CD4-positive, alpha-beta memory T cell (primary cell): ENCODE measurements at regions of chr22 and their contacts with region 1.

Region 1: GRCh38 chr22:41091132-41092022 is 1.0 kb upstream of the EP300 start:
- DNase-seq: peak; percentile 98 to 99 (median 99)
- H3K4me3 ChIP-seq: peak overlapping the region; percentile 79 to 93
- H3K4me3 Mint-ChIP-seq: peak overlapping the region; percentile 93 to 100 (median 98)
- H3K27ac ChIP-seq: peak overlapping the region; percentile 99
- H3K27ac Mint-ChIP-seq: peak overlapping the region; percentile 97 to 100 (median 99)
- H3K4me1 ChIP-seq: peaks cover 27% of the 10 kb centered on the region
- H3K4me1 Mint-ChIP-seq: peaks cover 20 to 44% (median 27%) of the 10 kb centered on the region in 4 donors
- H3K27me3 ChIP-seq: no peaks in the 10 kb centered on the region
- H3K27me3 Mint-ChIP-seq: no peaks in the 10 kb centered on the region

Region 2: GRCh38 chr22:40791241-40791640 is 300.1 kb before region 1 on chr22:
- CTCF ChIA-PET with region 1: no interaction called
- POLR2A ChIA-PET with region 1: no interaction called
- intact Hi-C with region 1: no loop called
- DNase-seq: no peak
- H3K4me3 ChIP-seq: no peak overlapping the region
- H3K4me3 Mint-ChIP-seq: no peak overlapping the region
- H3K27ac ChIP-seq: no peak overlapping the region
- H3K27ac Mint-ChIP-seq: peak overlapping the region in 2 of 7 donors; percentile 22 to 36
- H3K4me1 ChIP-seq: no peaks in the 10 kb centered on the region
- H3K4me1 Mint-ChIP-seq: peaks cover 0 to 5% (median under 1%) of the 10 kb centered on the region in 4 donors
- H3K27me3 ChIP-seq: no peaks in the 10 kb centered on the region
- H3K27me3 Mint-ChIP-seq: no peaks in the 10 kb centered on the region

Region 3: GRCh38 chr22:40818747-40819598 is 272.4 kb before region 1 on chr22 and contains the start of gene SLC25A17:
- CTCF ChIA-PET with region 1: no interaction called
- POLR2A ChIA-PET with region 1: no interaction called
- intact Hi-C with region 1: loop called (anchors 1 kb)
- DNase-seq: peak; percentile 81 to 84 (median 82)
- H3K4me3 ChIP-seq: peak within 1 kb of the TSS; percentile 92 to 95
- H3K4me3 Mint-ChIP-seq: peak within 1 kb of the TSS; percentile 92 to 99 (median 97)
- H3K27ac ChIP-seq: peak within 1 kb of the TSS; percentile 81
- H3K27ac Mint-ChIP-seq: peak within 1 kb of the TSS; percentile 82 to 98 (median 95)
- H3K4me1 ChIP-seq: peaks cover 27% of the 10 kb centered on the region
- H3K4me1 Mint-ChIP-seq: peaks cover 29 to 46% (median 36%) of the 10 kb centered on the region in 4 donors
- H3K27me3 ChIP-seq: no peaks in the 10 kb centered on the region
- H3K27me3 Mint-ChIP-seq: no peaks in the 10 kb centered on the region
- total RNA-seq, gene SLC25A17: 15.4 to 15.6 TPM

Region 4: GRCh38 chr22:41022470-41023298 is 68.7 kb before region 1 on chr22:
- CTCF ChIA-PET with region 1: no interaction called
- POLR2A ChIA-PET with region 1: interaction called, 73 read pairs
- intact Hi-C with region 1: loop called (anchors 1 kb)
- DNase-seq: peak; percentile 72 to 82 (median 78)
- H3K4me3 ChIP-seq: peak overlapping the region in 1 of 2 donors; percentile 59
- H3K4me3 Mint-ChIP-seq: peak overlapping the region; percentile 70 to 88 (median 78)
- H3K27ac ChIP-seq: peak overlapping the region; percentile 70
- H3K27ac Mint-ChIP-seq: peak overlapping the region; percentile 38 to 92 (median 89)
- H3K4me1 ChIP-seq: peaks cover 18% of the 10 kb centered on the region
- H3K4me1 Mint-ChIP-seq: peaks cover 8 to 32% (median 15%) of the 10 kb centered on the region in 4 donors
- H3K27me3 ChIP-seq: no peaks in the 10 kb centered on the region
- H3K27me3 Mint-ChIP-seq: no peaks in the 10 kb centered on the region

Region 5: GRCh38 chr22:41132550-41132949 is 41.2 kb after region 1 on chr22:
- CTCF ChIA-PET with region 1: no interaction called
- POLR2A ChIA-PET with region 1: interaction called, 6 read pairs
- intact Hi-C with region 1: loop called (anchors 5 kb)
- DNase-seq: no peak
- H3K4me3 ChIP-seq: no peak overlapping the region
- H3K4me3 Mint-ChIP-seq: no peak overlapping the region
- H3K27ac ChIP-seq: no peak overlapping the region
- H3K27ac Mint-ChIP-seq: peak overlapping the region in 3 of 7 donors; percentile 32 to 75 (median 42)
- H3K4me1 ChIP-seq: no peaks in the 10 kb centered on the region
- H3K4me1 Mint-ChIP-seq: peaks cover 0 to 9% (median 6%) of the 10 kb centered on the region in 4 donors
- H3K27me3 ChIP-seq: no peaks in the 10 kb centered on the region
- H3K27me3 Mint-ChIP-seq: no peaks in the 10 kb centered on the region

Region 6: GRCh38 chr22:41256254-41256897 is 165.0 kb after region 1 on chr22:
- CTCF ChIA-PET with region 1: no interaction called
- POLR2A ChIA-PET with region 1: no interaction called
- intact Hi-C with region 1: no loop called
- DNase-seq: no peak
- H3K4me3 ChIP-seq: no peak overlapping the region
- H3K4me3 Mint-ChIP-seq: no peak overlapping the region
- H3K27ac ChIP-seq: no peak overlapping the region
- H3K27ac Mint-ChIP-seq: peak overlapping the region in 1 of 7 donors; percentile 64
- H3K4me1 ChIP-seq: no peaks in the 10 kb centered on the region
- H3K4me1 Mint-ChIP-seq: peaks cover 0 to 2% (median 0%) of the 10 kb centered on the region in 4 donors
- H3K27me3 ChIP-seq: no peaks in the 10 kb centered on the region
- H3K27me3 Mint-ChIP-seq: no peaks in the 10 kb centered on the region

Region 7: DNA sequence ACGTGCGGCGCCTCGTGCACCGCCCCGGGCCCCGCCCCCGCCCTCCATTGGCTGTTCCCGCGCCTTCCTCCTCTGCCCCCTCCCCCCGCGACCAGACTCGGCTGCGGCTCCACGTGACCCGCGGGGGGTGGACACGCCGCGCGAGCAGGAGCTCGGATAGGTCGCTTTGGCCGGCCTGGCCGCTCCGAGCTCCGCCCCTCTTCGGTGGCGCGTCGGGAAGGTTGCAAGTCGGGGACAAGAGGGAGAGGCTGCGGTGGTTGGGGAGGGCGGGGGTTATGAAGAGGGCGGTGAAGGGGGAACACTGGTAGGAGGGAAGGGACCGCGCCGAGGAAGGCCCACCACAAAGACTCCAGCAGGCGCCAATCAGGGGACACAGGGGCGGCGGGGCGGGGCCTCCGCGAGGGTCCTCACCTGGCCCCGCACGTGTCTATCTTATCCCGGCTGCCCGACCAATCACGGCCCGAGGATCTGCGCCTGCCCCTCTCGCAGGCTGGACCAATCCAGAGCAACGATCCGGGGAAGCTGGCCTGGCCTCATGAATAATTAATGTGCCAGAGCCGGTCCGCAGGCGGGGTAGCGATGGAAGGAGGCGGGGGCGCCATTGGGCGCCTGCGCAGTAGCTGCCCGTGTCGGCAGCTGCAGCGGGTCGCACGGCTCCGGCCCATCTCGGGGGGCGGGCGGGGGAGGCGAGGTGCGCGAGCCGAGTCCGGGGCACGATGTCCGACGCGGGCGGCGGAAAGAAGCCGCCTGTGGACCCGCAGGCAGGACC is 290.1 kb after region 1 on chr22 and contains the start of gene TEF:
- CTCF ChIA-PET with region 1: no interaction called
- POLR2A ChIA-PET with region 1: interaction called, 6 read pairs
- intact Hi-C with region 1: loop called (anchors 5 kb)
- DNase-seq: peak; percentile 99
- H3K4me3 ChIP-seq: peak within 1 kb of the TSS; percentile 65 to 88
- H3K4me3 Mint-ChIP-seq: peak within 1 kb of the TSS; percentile 90 to 97 (median 94)
- H3K27ac ChIP-seq: peak within 1 kb of the TSS; percentile 87
- H3K27ac Mint-ChIP-seq: peak within 1 kb of the TSS; percentile 98 to 99 (median 98)
- H3K4me1 ChIP-seq: peaks cover 18% of the 10 kb centered on the region
- H3K4me1 Mint-ChIP-seq: peaks cover 12 to 36% (median 22%) of the 10 kb centered on the region in 4 donors
- H3K27me3 ChIP-seq: no peaks in the 10 kb centered on the region
- H3K27me3 Mint-ChIP-seq: no peaks in the 10 kb centered on the region
- total RNA-seq, gene TEF: 6.5 to 8.8 TPM